ENCODE measurements at regions of chr3 and their contacts with region 1.

Region 1: DNA sequence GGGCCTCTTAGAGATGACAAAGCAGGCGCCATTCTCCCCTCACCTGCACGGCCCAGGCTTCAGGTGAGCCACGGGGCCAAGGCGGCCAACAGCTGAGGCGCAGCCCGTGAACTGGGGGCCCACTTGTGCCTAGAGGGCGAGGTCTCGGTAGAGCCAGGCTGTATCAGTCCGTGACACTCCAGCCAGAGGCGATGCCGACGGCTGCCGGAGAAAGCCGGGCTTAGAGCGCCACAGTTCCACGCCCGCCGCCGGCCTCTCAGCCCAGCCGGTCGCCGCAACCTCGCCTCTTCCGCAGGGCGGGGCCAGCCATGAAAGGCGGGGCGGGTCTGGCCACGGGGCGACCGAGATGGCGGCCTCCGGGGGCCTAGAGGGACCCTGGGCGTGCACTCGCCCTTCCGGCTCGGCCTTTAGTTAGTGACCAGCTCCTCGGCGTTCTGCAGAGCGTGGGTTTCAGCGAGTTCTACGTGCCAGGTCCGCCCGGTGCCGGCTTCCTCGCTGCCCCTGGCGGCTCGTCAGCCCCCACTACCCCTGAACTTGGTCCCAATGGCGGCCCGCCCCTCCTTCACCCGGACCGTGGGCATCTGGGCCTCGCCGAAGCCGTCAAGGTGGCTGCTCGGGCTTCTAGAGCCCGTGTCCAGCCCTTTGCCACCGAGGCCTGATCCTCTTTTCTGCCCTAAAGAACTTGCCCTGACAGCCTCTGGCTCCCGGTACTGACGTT is at the start of gene ZNF621:
- DNase-seq: peak; percentile 43
- ATAC-seq: peak; percentile 98
- H3K4me3 ChIP-seq: peak within 1 kb of the TSS; percentile 95
- H3K27ac ChIP-seq: peak within 1 kb of the TSS; percentile 73
- H3K4me1 ChIP-seq: no peaks in the 10 kb centered on the region
- H3K27me3 ChIP-seq: no peaks in the 10 kb centered on the region
- CTCF ChIP-seq: no peak; a peak in 1 of 6 replicates
- EP300 ChIP-seq: no peak
- POLR2A ChIP-seq: peak; percentile 98
- RAD21 ChIP-seq: no peak
- polyA plus RNA-seq, gene ZNF621: 2.9 to 4.3 TPM

Region 2: GRCh38 chr3:40452876-40453730 is 71.6 kb before region 1 on chr3:
- CTCF ChIA-PET with region 1: interaction called, 6 read pairs
- POLR2A ChIA-PET with region 1: interaction called, 5 read pairs
- RAD21 ChIA-PET with region 1: interaction called, 4 read pairs
- SMC1A ChIA-PET with region 1: interaction called, 3 read pairs
- in situ Hi-C with region 1: no loop called
- intact Hi-C with region 1: loop called (anchors 5 kb)
- DNase-seq: peak; percentile 93
- ATAC-seq: peak; percentile 95
- H3K4me3 ChIP-seq: peak overlapping the region; percentile 82
- H3K27ac ChIP-seq: peak overlapping the region; percentile 81
- H3K4me1 ChIP-seq: no peaks in the 10 kb centered on the region; the same call in 1 of the 2 replicates
- H3K27me3 ChIP-seq: no peaks in the 10 kb centered on the region
- CTCF ChIP-seq: no peak
- EP300 ChIP-seq: no peak
- POLR2A ChIP-seq: peak; percentile 87
- RAD21 ChIP-seq: no peak

Region 3: DNA sequence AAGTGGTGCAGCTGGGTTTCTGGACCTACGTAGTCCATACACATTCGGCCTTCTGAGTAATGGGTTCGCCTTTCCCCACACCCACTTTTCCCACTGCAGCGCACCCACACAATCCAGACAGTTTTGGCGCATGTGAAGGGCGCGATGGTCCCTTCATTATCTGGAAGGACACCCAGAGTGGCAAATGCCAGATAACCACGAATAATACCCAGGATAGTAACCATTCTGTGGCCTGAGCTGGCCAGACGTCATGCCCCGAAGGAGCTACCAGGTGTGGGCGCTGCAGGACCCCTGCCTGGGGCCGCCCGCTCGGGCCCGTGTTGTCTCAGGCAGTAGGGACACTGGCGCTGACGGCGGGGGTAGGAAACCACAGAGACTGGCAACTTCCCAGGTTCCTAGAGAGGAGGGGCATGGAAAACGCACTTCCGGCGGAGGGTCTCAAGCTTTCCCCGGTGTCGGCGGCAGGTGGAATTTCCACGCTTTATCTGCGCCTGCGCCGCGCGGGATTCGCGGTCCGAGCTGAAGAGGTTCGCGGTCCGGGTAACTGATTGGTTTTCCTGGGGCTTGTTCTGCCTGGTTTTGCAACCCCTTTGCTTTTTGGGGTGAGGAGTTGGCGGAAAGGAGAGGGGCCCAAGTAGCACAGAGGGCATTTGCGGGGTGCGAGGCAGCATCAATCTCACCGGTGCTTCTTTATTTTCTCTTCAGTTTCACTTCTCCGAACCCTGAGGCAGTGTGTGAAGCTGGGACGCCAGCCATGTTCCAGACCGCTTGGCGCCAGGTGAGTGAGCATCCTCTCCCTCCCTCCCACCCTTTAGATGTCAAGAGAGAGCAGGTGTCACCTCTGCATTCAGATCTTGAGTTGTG is 18.9 kb before region 1 on chr3 and contains the start of gene ZNF620:
- CTCF ChIA-PET with region 1: interaction called, 16 read pairs
- POLR2A ChIA-PET with region 1: interaction called, 12 read pairs
- RAD21 ChIA-PET with region 1: interaction called, 3 read pairs
- SMC1A ChIA-PET with region 1: interaction called, 4 read pairs
- in situ Hi-C with region 1: no loop called
- intact Hi-C with region 1: no loop called
- DNase-seq: no peak
- ATAC-seq: peak; percentile 95
- H3K4me3 ChIP-seq: peak within 1 kb of the TSS; percentile 75
- H3K27ac ChIP-seq: peak within 1 kb of the TSS; percentile 53; the same call in 1 of the 2 replicates
- H3K4me1 ChIP-seq: peaks cover 5% of the 10 kb centered on the region; the same call in 1 of the 2 replicates
- H3K27me3 ChIP-seq: no peaks in the 10 kb centered on the region
- CTCF ChIP-seq: peak; percentile 40 to 61 (median 48); a peak in 5 of 6 replicates
- EP300 ChIP-seq: no peak
- POLR2A ChIP-seq: no peak
- RAD21 ChIP-seq: 0 out of 2 replicates have a peak, but pooled peaks have one; percentile 2
- polyA plus RNA-seq, gene ZNF620: 1.3 to 1.7 TPM

Region 4: DNA sequence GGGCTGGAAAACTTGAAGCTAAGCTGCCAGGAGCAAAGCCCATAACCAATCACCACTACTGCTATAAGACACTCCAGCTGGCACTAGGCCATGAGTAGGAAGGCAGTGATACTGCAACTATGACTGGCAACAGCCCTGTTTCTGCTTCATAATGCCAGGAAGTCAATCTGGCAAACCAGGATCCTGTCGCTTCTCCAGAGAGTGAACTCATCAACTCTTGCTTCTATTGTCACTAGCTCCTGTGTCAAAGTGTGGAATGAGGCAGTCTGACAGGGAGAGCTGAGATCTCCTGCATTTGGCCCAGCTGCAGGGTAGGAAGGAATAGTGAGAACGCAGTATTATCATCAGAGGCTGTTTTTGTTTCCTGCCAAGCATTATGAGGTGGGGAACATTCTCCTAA is 779.9 kb after region 1 on chr3:
- CTCF ChIA-PET with region 1: no interaction called
- POLR2A ChIA-PET with region 1: no interaction called
- RAD21 ChIA-PET with region 1: no interaction called
- SMC1A ChIA-PET with region 1: no interaction called
- in situ Hi-C with region 1: no loop called
- intact Hi-C with region 1: no loop called
- DNase-seq: no peak
- ATAC-seq: no peak
- H3K4me3 ChIP-seq: no peak overlapping the region
- H3K27ac ChIP-seq: no peak overlapping the region
- H3K4me1 ChIP-seq: no peaks in the 10 kb centered on the region
- H3K27me3 ChIP-seq: no peaks in the 10 kb centered on the region
- CTCF ChIP-seq: no peak
- EP300 ChIP-seq: no peak
- POLR2A ChIP-seq: no peak
- RAD21 ChIP-seq: no peak

Measured in GM12878 (cell line).